ENCODE measurements at regions of chr1 and their contacts with region 1.

Region 1: GRCh38 chr1:111184663-111185062 is 15.8 kb downstream of the DENND2D start:
- DNase-seq: no peak
- ATAC-seq: no peak
- H3K4me3 ChIP-seq: no peak overlapping the region
- H3K4me3 Mint-ChIP-seq: no peak overlapping the region
- H3K27ac ChIP-seq: no peak overlapping the region
- H3K27ac Mint-ChIP-seq: peak overlapping the region; percentile 75 to 81
- H3K4me1 ChIP-seq: peaks cover 13 to 22% of the 10 kb centered on the region in 2 experiments
- H3K4me1 Mint-ChIP-seq: peaks cover 84 to 92% (median 91%) of the 10 kb centered on the region in 3 donors
- H3K27me3 ChIP-seq: no peaks in the 10 kb centered on the region
- H3K27me3 Mint-ChIP-seq: no peaks in the 10 kb centered on the region

Region 2: DNA sequence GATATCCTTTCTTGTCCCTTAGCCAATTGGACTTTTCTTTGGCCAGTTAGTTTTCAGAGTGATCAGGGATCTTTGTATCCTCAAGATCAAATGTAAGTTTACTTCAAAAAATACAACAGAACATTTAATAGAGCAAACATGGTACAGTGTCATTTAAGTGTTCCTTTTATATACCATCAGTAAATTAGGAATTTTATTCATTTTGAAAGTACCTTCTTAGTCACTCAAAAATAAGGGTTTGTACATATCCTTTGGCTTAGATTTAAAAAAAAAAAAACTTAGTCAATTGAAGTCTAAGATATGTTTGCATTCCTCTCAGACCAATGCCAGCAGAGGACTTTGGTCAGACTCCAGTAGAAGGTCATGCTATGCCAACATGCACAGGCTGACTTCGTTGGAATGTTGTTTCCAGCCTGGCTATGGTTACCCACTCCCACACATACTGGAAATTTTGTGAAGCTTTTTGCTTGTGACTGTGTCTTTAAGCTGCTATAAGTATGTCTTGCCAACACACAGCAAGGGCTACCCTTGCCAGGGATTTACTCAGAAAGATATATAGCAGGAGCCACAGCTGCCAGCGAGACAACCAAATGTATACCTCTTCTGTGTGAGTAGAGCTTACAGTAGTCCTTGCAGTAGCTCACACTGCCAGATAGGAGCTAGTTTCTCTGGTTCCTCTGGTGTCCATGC is 139.5 kb before region 1 on chr1:
- CTCF ChIA-PET with region 1: no interaction called
- POLR2A ChIA-PET with region 1: interaction called in 1 of 2 experiments, 11 read pairs
- DNase-seq: no peak
- ATAC-seq: no peak
- H3K4me3 ChIP-seq: no peak overlapping the region
- H3K4me3 Mint-ChIP-seq: no peak overlapping the region
- H3K27ac ChIP-seq: no peak overlapping the region
- H3K27ac Mint-ChIP-seq: no peak overlapping the region
- H3K4me1 ChIP-seq: no peaks in the 10 kb centered on the region
- H3K4me1 Mint-ChIP-seq: no peaks in the 10 kb centered on the region
- H3K27me3 ChIP-seq: peaks cover 0 to 5% of the 10 kb centered on the region in 2 experiments
- H3K27me3 Mint-ChIP-seq: peaks cover 22 to 30% of the 10 kb centered on the region in 2 donors

Region 3: GRCh38 chr1:111214074-111214801 is 29.6 kb after region 1 on chr1:
- CTCF ChIA-PET with region 1: interaction called, 4 to 8 read pairs
- POLR2A ChIA-PET with region 1: interaction called, 3 to 15 read pairs
- DNase-seq: peak in 1 of 35 experiments; percentile 6
- ATAC-seq: no peak
- H3K4me3 ChIP-seq: no peak overlapping the region
- H3K4me3 Mint-ChIP-seq: peak overlapping the region; percentile 62 to 81 (median 63)
- H3K27ac ChIP-seq: peak overlapping the region; percentile 87
- H3K27ac Mint-ChIP-seq: peak overlapping the region; percentile 95 to 96
- H3K4me1 ChIP-seq: peaks cover 50 to 70% of the 10 kb centered on the region in 2 experiments
- H3K4me1 Mint-ChIP-seq: peaks cover 82 to 92% (median 88%) of the 10 kb centered on the region in 3 donors
- H3K27me3 ChIP-seq: no peaks in the 10 kb centered on the region
- H3K27me3 Mint-ChIP-seq: peaks cover 0 to 2% of the 10 kb centered on the region in 2 donors